GM13977 (cell line): ENCODE measurements at regions of chr5 and their contacts with region 1.

Region 1: DNA sequence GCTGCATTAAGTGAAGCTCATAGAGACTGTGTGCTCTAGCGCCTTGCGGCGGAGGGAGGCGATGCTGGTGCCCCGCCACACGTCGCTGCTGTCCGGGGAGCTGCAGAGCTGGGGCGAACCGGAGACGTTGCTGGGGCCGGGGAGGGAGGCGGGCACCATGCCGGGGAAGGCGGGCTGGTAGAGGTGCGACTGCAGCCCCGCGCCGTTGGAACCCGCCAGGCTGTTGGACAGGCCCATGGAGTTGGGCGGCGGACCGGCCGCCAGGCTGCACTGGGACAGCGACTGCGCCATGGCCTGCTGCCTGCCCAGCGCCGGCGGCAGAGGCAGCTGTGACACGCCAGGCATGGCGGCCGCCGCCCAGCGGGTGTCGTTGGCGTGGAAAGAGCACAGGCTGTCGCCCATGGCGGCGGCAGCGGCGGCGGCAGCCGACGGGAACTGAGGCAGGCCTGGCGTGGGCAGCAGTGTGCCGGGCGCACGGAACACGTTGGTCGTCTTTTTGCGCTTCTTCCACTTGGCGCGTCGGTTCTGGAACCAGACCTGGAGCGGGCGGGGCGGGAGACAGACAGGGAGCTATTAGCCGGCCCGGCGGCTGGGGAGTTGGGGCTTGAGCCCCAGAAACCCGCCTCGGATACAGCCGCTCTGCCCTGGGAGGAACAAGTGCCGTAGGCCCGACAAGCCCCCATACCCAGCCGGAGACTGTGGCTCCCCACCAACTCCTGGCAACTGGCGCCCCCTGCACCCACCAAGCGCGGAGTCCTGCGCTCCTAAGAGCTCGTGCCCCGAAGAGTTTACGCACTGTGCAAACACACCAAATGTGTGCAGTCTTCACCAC is 8.0 kb downstream of the OTP start:
- DNase-seq: peak; percentile 93
- CTCF ChIP-seq: peak; percentile 51

Region 2: DNA sequence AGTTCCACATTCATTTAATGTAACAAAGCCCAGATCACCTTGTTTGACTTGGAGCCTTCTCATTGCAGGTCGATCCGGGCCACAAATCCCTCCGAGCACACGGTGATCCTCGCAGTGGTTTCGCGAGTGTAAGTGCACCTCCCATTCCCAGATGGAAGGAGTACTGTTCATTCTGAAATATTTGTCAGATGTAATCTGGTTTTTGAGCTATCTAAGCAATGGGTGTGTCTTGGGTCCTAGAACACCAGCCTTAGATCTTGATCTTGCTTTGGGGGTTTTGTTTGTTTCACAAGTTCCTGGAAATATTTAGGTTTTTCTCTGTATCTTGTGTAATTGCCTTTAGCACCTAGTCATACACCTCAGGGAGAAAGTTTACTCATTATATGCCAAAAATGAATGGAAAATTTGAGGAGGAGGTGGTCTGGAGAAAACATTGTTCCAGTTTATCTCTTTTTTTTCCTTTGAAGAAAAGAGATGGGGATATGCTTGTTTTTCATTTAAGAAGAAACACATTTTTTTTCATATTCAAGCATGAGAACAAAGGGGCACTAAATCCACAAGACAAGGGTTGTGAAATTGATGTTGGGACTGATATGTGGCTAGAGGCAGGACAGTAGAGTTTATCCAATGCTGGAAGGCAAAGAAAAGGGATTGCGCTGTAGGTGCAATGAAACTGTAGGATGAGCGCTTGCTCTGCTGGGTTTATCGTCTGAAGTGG is 301.4 kb before region 1 on chr5:
- in situ Hi-C with region 1: no loop called
- DNase-seq: no peak
- CTCF ChIP-seq: no peak

Region 3: DNA sequence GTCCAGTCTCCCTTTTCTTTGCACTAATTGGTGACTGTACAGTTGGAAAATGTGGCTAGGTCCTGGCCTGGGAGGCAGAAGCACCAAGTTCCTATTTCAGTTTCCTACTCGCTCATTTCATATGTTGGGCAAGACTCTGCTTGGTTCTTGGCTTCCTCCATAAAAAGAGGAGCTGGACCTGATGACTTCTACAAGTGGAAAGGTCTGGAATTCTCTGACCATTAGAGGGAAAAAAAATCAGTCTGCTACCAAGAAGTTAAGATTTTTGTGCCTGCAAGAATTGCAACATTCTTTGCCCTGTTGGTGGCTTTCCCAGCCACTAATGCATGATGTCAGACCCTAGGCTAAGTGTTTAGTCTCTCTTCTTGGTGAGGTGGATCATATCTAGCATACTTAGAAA is 229.8 kb before region 1 on chr5:
- in situ Hi-C with region 1: no loop called
- DNase-seq: no peak
- CTCF ChIP-seq: no peak

Region 4: DNA sequence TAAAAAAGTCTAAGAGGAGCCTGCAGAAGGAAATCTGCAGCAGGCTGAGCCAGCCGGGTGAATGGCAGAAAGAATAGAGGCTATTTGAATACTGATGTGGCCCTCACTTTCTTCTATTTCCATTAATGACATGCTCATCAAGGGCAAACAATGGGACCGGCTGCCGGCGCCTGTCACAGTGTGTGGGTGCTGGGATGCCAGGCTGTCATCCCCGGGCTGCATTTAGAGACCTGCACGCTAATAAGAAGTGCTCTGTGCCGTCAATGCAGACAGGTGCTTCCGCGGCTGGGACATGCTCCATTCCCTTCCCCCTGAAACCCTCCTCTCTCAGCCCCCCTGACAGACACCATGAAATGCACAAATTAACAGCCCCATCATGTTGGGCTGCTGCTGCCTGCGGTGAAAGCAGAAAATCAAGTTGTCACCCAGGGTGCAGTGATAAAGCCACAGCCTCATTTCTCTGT is 363.4 kb after region 1 on chr5:
- in situ Hi-C with region 1: loop called (anchors 25 kb)
- DNase-seq: no peak
- CTCF ChIP-seq: no peak